Ovary (tissue), 10 donors: ENCODE measurements at regions of chr15 and their contacts with region 1.

Region 1: DNA sequence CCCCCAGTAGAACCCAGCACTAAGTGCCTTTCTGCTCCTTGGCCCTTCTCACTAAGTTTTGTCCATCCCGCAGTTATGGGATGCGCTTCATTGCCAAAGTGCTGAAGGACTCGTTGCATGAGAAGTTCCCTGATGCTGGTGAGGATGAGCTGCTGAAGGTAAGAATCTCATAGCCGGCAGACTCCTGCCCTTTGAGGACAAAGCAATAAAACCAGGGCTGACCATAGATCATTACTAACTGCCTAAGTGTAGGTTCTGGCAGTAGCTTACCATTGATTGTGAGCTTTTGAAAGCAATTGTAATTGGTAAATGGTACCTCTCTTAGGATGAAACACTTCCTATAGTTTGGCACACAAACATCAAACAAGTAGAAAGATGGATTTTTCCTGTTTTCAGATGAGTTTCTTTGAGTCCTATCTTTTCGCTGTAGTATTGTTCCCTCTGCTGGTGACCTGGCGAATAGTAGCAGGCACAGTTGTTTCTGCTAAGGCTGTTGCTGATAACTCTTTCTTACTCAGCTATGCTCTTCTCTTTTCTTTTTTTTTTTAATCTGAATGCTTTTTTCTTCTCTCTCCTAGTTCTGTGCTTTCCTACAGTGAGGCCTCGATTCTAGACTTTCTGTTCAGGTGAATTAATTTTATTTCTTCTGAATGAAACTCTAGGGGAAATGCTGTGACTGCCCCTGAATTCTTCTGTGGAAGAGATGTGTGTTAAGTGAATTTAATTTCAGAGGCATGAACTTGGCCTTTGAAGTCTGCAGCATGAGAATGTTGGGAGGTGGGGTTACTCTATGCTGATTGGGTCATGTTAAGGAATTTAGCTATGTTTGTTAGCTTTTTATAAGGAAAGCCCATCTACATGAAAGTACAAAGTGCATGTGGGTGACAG is 47.4 kb upstream of the CRTC3 start:
- DNase-seq: peak; percentile 37 to 72 (median 56)
- H3K4me3 ChIP-seq: no peak overlapping the region
- H3K27ac ChIP-seq: no peak overlapping the region
- H3K4me1 ChIP-seq: no peaks in the 10 kb centered on the region
- H3K27me3 ChIP-seq: no peaks in the 10 kb centered on the region
- CTCF ChIP-seq: peak; percentile 47 to 85 (median 80)
- EP300 ChIP-seq: no peak
- POLR2A ChIP-seq: no peak

Region 2: DNA sequence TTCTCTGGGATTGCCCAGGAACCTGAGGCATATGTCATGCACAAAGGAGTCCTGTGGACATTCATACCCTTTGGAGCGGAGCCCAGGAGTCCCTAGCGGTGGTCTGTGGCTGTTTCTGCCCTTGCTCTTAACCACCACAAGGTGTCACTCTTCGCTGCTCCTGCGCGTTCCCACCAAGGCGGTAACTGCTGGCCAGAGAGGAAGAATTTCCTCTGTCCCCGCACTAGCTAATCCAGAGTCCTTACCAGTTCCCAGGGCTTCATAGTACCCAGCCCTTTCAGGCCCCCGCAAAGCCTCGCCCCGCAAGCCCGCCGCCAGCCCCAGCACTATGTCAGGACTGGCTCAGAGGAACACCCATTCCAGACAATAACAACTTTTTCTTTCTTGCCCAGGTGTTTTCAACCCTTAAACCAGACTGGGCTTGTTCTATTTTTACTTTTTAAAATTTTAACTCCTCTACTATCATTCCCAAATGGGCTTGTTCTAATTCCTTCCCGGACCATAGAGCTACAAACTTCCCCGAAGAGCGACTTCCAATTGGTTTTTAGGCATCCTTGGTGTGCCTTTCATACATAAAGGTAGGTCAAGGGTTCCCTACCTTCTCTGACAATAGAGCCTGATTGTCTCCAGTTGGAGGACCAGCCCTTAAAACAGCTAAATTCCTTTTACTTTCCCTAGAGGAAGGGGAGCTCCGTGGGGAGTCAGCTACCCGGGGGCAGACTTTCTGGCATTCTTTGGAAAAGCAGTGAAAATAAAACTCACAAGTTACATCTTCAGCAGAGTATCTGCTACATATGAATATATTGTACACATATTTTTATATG is 162.1 kb before region 1 on chr15:
- intact Hi-C with region 1: loop called (anchors 2 to 5 kb)
- DNase-seq: peak; percentile 81 to 84 (median 83)
- H3K4me3 ChIP-seq: no peak overlapping the region
- H3K27ac ChIP-seq: no peak overlapping the region
- H3K4me1 ChIP-seq: peaks cover 5% of the 10 kb centered on the region
- H3K27me3 ChIP-seq: no peaks in the 10 kb centered on the region
- CTCF ChIP-seq: peak; percentile 94 to 99 (median 97)
- EP300 ChIP-seq: no peak
- POLR2A ChIP-seq: no peak

Region 3: GRCh38 chr15:90592131-90592881 is 109.9 kb after region 1 on chr15:
- intact Hi-C with region 1: no loop called
- DNase-seq: no peak
- H3K4me3 ChIP-seq: no peak overlapping the region
- H3K27ac ChIP-seq: no peak overlapping the region
- H3K4me1 ChIP-seq: peaks cover 20% of the 10 kb centered on the region
- H3K27me3 ChIP-seq: no peaks in the 10 kb centered on the region
- CTCF ChIP-seq: no peak
- EP300 ChIP-seq: no peak
- POLR2A ChIP-seq: no peak

Region 4: DNA sequence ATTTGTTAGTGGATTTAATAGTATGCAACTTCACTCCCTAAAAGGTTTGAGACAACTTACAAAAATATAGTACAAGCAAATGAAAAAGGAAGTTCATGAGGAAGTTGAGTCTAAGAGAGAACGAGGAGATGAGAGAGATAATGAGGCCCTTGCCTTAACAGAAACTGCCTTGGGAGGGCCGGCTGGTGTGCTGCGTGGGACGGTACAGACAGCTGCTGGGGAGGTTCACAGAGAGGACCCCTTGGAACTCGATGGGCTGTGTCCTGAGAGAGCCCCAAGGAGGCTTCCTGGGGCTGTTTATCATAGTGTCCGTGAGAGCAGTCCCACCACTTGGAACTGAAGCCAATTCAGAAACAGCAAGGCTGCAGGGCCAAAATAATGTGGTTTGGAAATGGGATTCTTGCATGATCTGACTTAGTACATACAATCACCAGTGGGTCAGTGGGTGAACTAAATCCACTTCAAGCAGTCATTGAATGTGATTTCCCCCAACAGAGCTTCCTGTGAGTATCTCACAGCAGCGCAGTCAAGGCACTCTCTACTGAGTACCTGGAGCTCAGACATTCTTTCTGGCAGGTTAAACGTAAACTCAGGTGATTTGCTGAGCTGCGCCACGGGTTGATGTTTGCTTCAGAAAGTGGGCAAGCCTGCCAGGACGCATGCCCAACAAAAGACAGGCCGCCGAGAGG is 138.2 kb after region 1 on chr15:
- intact Hi-C with region 1: no loop called
- DNase-seq: no peak
- H3K4me3 ChIP-seq: no peak overlapping the region
- H3K27ac ChIP-seq: no peak overlapping the region
- H3K4me1 ChIP-seq: peaks cover 5% of the 10 kb centered on the region
- H3K27me3 ChIP-seq: no peaks in the 10 kb centered on the region
- CTCF ChIP-seq: no peak
- EP300 ChIP-seq: no peak
- POLR2A ChIP-seq: no peak